ENCODE measurements at regions of chr1 and their contacts with region 1.

Region 1: DNA sequence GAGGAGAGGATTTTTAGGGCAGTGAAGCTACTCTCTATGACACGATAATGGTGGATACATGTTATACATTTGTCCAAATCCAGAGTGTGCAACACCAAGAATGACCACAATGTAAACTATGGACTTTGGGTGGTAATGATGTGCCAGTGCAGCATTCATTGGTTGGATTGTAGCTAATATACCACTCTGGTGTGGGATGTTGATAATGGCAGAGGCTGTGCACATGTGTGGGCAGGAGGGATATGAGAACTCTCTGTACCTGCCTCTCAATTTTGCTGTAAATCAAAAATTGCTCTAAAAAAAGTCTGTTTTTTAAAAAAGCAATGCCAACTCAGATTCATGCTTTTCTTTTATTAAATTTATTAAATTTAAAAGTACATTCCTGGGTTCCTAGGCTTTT is 27.2 kb upstream of the LPAR3 start:
- DNase-seq: no peak
- H3K4me3 ChIP-seq: no peak overlapping the region
- H3K4me3 Mint-ChIP-seq: no peak overlapping the region
- H3K27ac Mint-ChIP-seq: no peak overlapping the region
- H3K4me1 ChIP-seq: no peaks in the 10 kb centered on the region
- H3K4me1 Mint-ChIP-seq: no peaks in the 10 kb centered on the region
- H3K27me3 ChIP-seq: no peaks in the 10 kb centered on the region
- H3K27me3 Mint-ChIP-seq: peaks cover 9% of the 10 kb centered on the region
- CTCF ChIP-seq: no peak

Region 2: GRCh38 chr1:84944767-84945486 is 24.8 kb after region 1 on chr1:
- CTCF ChIA-PET with region 1: no interaction called
- POLR2A ChIA-PET with region 1: no interaction called
- intact Hi-C with region 1: no loop called
- DNase-seq: peak; percentile 65 to 74
- H3K4me3 ChIP-seq: no peak overlapping the region
- H3K4me3 Mint-ChIP-seq: no peak overlapping the region
- H3K27ac Mint-ChIP-seq: no peak overlapping the region
- H3K4me1 ChIP-seq: no peaks in the 10 kb centered on the region
- H3K4me1 Mint-ChIP-seq: no peaks in the 10 kb centered on the region
- H3K27me3 ChIP-seq: no peaks in the 10 kb centered on the region
- H3K27me3 Mint-ChIP-seq: peaks cover 11% of the 10 kb centered on the region
- CTCF ChIP-seq: peak; percentile 53 to 68

Region 3: DNA sequence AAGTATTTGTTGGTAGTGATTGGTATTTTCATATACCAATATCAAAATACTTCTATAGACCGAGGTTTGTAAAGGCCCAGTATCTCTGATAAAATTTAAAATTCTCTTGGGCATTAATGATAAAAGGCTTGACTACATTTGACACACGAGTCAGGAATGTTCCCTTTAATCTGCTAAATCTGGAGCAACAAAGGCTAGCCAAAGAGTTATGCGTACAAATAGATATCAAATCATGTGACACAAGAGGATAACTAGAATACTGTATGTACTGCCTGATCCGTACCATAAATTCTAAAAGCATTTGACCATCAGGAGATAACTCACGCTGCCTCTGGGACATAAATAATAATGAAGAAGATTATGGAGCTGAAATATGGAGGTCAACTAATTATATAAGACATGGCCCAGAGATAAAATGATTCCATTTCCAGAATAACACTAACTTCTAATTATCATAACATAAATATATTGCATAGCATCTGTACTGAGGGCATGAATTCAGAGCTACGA is 1720.1 kb after region 1 on chr1:
- CTCF ChIA-PET with region 1: no interaction called
- POLR2A ChIA-PET with region 1: no interaction called
- intact Hi-C with region 1: loop called (anchors 5 kb)
- DNase-seq: no peak
- H3K4me3 ChIP-seq: no peak overlapping the region
- H3K4me3 Mint-ChIP-seq: no peak overlapping the region
- H3K27ac Mint-ChIP-seq: no peak overlapping the region
- H3K4me1 ChIP-seq: no peaks in the 10 kb centered on the region; the same call in 1 of the 2 replicates
- H3K4me1 Mint-ChIP-seq: no peaks in the 10 kb centered on the region
- H3K27me3 ChIP-seq: no peaks in the 10 kb centered on the region
- H3K27me3 Mint-ChIP-seq: no peaks in the 10 kb centered on the region
- CTCF ChIP-seq: no peak